ENCODE measurements at regions of chr1 and their contacts with region 1.

Region 1: DNA sequence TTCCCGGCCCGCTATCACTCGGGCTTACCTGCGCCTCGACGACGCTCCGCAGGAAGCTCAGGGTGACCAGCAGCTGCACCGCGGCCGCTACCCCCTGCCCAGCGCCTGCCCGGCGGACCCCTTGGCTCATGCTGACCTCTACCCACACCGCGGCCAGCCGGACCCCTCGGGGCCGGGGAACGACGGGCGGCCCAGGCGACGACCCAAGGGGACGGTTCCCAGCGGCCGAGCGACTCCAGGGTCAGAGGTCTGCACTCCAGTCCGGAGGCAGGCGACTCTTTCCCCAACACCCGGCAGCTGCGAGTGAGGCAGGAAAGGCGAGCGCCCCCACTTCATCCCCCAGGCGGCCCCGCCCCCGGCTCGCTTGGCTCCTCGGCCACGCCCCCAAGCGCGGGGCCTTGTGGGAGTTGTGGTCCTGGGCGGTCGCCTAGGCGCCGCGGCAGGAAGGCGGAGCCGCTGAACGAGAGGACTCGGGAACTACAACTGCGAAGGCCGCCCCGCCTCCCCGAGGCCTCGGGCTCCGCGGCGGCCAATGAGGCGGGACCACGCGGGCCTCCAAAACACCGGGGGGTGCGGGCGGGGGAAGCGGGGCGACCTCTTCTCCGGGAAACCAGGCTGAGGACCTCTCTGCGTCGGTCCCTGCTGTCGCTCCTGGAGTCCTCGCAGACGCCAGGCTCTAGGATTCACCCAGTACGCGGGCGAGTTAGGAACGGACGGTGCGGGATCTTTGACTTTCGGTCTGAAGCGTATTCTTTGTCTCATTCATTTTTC is at the start of gene ERO1B:
- DNase-seq: peak; percentile 100
- H3K4me3 Mint-ChIP-seq: peak within 1 kb of the TSS; percentile 89
- H3K27ac Mint-ChIP-seq: peak within 1 kb of the TSS; percentile 82
- H3K4me1 Mint-ChIP-seq: peaks cover 34% of the 10 kb centered on the region
- H3K27me3 Mint-ChIP-seq: peaks cover 9% of the 10 kb centered on the region
- total RNA-seq, gene ERO1B: 1.5 and 3.2 TPM in 2 replicates

Region 2: GRCh38 chr1:235504496-235505222 is 777.2 kb before region 1 on chr1:
- intact Hi-C with region 1: loop called (anchors 5 kb)
- DNase-seq: peak; percentile 99
- H3K4me3 Mint-ChIP-seq: peak overlapping the region; percentile 95
- H3K27ac Mint-ChIP-seq: peak overlapping the region; percentile 97
- H3K4me1 Mint-ChIP-seq: peaks cover 25% of the 10 kb centered on the region
- H3K27me3 Mint-ChIP-seq: peaks cover 6% of the 10 kb centered on the region

Region 3: GRCh38 chr1:236103646-236104218 is 178.1 kb before region 1 on chr1:
- intact Hi-C with region 1: loop called (anchors 5 kb)
- DNase-seq: peak; percentile 88
- H3K4me3 Mint-ChIP-seq: no peak overlapping the region
- H3K27ac Mint-ChIP-seq: no peak overlapping the region
- H3K4me1 Mint-ChIP-seq: peaks cover 8% of the 10 kb centered on the region
- H3K27me3 Mint-ChIP-seq: peaks cover 4% of the 10 kb centered on the region

Region 4: GRCh38 chr1:236142253-236143103 is 139.4 kb before region 1 on chr1 and contains the start of gene GPR137B:
- intact Hi-C with region 1: loop called (anchors 2 kb)
- DNase-seq: peak; percentile 88
- H3K4me3 Mint-ChIP-seq: peak within 1 kb of the TSS; percentile 92
- H3K27ac Mint-ChIP-seq: peak within 1 kb of the TSS; percentile 82
- H3K4me1 Mint-ChIP-seq: peaks cover 28% of the 10 kb centered on the region
- H3K27me3 Mint-ChIP-seq: peaks cover 37% of the 10 kb centered on the region
- total RNA-seq, gene GPR137B: 6.6 and 7.7 TPM in 2 replicates

Region 5: GRCh38 chr1:236489710-236490377 is 208.0 kb after region 1 on chr1:
- intact Hi-C with region 1: loop called (anchors 10 kb)
- DNase-seq: peak; percentile 64
- H3K4me3 Mint-ChIP-seq: no peak overlapping the region
- H3K27ac Mint-ChIP-seq: no peak overlapping the region
- H3K4me1 Mint-ChIP-seq: peaks cover 13% of the 10 kb centered on the region
- H3K27me3 Mint-ChIP-seq: peaks cover 26% of the 10 kb centered on the region

Region 6: DNA sequence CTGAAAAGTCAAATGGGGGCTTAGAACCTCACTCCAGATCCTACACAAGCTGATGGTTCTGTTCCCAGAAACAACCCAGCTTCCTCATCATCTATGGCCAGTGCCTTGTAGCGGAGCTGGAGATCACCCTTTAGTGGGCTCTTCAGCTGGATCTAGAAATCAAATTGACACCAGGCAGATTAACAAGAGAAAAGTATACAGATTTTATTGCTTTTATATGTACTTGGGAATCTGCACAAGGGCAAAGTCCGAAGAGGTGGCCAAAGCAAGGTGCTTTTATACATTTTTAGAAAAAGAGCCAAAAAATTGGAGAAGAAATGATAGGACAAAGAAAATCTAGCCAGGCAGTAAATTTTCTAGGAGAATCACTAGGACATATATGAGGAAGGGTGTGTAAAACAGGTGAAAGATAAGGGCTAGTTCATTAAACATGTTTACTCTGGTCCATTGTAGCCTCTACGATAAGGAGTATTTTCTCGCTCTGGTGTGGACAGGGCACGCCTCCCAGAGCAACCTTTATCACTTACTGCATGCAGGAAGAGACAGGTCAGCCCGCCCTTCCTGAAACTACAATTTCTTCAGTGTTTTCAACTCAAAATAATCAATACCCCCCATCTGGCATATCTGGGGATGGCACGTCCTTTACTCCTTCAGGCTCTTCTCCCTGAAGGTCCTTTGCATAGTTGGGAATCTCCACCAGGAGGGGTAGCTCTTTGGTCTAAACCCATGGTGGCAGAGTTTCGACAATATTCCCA is 228.0 kb after region 1 on chr1:
- intact Hi-C with region 1: no loop called
- DNase-seq: no peak
- H3K4me3 Mint-ChIP-seq: no peak overlapping the region
- H3K27ac Mint-ChIP-seq: no peak overlapping the region
- H3K4me1 Mint-ChIP-seq: peaks cover 13% of the 10 kb centered on the region
- H3K27me3 Mint-ChIP-seq: peaks cover 12% of the 10 kb centered on the region

Region 7: DNA sequence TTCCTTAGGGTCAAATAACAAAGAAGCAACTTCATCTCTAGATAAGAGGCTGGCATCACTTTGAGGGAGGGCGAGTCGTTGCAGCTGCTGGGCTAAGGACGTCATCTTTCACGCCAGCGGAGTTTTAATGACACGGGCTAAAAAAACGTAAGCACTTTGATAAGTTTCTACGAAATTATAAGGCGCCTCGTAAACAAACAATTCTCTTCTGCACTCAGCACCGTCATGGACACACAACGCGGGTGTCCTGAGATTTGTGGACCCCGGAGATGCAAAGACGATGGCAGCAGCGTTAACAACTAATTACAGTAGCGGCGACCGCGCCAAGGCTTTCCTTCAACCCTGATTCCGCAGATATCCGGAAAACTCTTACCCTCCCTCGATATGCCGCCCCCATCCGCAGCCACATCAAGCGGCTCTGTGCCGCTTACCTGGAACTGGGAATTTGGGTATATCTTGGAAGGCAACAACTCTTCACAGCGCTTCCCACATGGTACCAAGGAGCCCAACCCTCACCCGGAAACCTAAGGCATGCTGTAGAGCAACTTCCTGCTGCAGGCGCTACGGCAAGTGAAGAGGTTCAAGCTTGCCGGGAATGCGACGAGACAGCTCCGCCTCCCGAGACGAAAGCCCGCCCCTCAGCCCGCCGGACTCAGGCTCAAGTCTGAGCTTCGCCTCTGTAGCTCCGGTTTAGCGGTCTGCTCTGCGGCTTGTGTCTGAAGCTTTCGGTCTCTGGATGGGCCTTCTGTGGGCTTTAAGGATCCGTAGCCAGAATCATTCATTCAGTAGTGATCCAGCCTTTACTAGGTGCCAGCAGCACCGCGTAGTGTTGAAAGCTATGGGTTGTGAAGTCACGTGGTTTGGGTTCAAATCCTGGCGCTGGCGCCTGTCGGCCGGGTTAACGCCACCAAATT is 322.4 kb after region 1 on chr1 and contains the start of gene HEATR1:
- intact Hi-C with region 1: loop called (anchors 5 kb)
- DNase-seq: peak; percentile 97
- H3K4me3 Mint-ChIP-seq: peak within 1 kb of the TSS; percentile 89
- H3K27ac Mint-ChIP-seq: peak within 1 kb of the TSS; percentile 94
- H3K4me1 Mint-ChIP-seq: peaks cover 24% of the 10 kb centered on the region
- H3K27me3 Mint-ChIP-seq: peaks cover 14% of the 10 kb centered on the region
- total RNA-seq, gene HEATR1: 83.0 and 91.8 TPM in 2 replicates

Measured in activated CD4-positive, alpha-beta T cell treated with anti-CD3 and anti-CD28 coated beads, Interleukin-2, amount 10 ng/mL, durations not matched to agents 24 days and 14 days (primary cell).